ENCODE measurements at regions of chr17 and their contacts with region 1.

Region 1: GRCh38 chr17:17016199-17016866 is 25.9 kb upstream of the MPRIP start:
- DNase-seq: peak; percentile 56
- ATAC-seq: no peak
- H3K4me3 ChIP-seq: no peak overlapping the region
- H3K27ac ChIP-seq: peak overlapping the region; percentile 96
- H3K4me1 ChIP-seq: peaks cover 63% of the 10 kb centered on the region
- H3K27me3 ChIP-seq: no peaks in the 10 kb centered on the region
- CTCF ChIP-seq: no peak

Region 2: DNA sequence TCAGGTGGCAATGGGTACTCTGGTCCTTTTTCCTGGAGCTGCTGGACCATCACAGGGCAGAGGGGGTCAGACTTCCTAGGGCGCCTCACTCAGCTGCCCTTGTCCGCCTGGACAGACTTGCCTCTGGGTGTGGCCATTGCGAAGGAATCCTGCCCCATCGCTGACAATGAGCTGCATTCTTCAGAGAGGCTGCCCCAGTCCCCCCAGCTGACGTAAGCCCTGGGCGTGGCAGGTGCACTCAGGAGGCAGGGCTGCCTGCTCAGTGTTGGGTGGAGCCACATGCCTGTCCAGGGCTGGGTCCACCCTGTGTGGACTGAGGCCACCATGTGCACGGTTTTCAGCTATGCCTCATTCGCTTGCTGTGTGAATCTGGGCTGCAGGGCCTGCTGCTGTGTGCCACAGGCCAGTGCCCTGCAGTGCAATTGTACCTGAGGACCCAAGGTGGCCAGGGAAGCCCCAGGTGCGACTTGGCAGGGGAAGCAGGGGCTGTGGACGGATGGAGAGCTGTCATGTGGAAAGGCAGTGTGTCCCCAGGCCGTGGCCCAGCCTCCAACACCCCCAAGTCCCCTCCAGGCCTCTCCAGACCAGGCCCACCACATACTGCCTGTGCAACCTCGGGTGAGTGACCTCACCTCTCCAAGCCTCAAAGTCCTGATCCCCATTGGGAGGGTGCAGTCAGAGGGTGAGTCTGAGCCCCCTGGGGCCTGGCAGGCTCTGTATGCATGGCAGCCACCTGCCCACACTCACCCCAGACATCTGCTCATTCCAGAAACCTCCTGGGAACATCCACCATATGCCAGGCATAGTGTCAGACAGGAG is 11.9 kb after region 1 on chr17:
- CTCF ChIA-PET with region 1: no interaction called
- POLR2A ChIA-PET with region 1: interaction called, 7 read pairs
- intact Hi-C with region 1: loop called (anchors 2 kb)
- DNase-seq: peak; percentile 100
- ATAC-seq: peak; percentile 92
- H3K4me3 ChIP-seq: no peak overlapping the region
- H3K27ac ChIP-seq: peak overlapping the region; percentile 93
- H3K4me1 ChIP-seq: peaks cover 47% of the 10 kb centered on the region
- H3K27me3 ChIP-seq: no peaks in the 10 kb centered on the region
- CTCF ChIP-seq: no peak; the same call in 1 of the 2 replicates

Region 3: GRCh38 chr17:17041571-17042380 is 25.4 kb after region 1 on chr17:
- CTCF ChIA-PET with region 1: no interaction called
- POLR2A ChIA-PET with region 1: interaction called, 10 read pairs
- intact Hi-C with region 1: no loop called
- DNase-seq: peak; percentile 99
- ATAC-seq: peak; percentile 79
- H3K4me3 ChIP-seq: peak overlapping the region; percentile 79
- H3K27ac ChIP-seq: peak overlapping the region; percentile 85
- H3K4me1 ChIP-seq: peaks cover 37% of the 10 kb centered on the region
- H3K27me3 ChIP-seq: no peaks in the 10 kb centered on the region
- CTCF ChIP-seq: no peak